Posterior vena cava (tissue), 2 donors: ENCODE measurements at regions of chr7 and their contacts with region 1.

Region 1: DNA sequence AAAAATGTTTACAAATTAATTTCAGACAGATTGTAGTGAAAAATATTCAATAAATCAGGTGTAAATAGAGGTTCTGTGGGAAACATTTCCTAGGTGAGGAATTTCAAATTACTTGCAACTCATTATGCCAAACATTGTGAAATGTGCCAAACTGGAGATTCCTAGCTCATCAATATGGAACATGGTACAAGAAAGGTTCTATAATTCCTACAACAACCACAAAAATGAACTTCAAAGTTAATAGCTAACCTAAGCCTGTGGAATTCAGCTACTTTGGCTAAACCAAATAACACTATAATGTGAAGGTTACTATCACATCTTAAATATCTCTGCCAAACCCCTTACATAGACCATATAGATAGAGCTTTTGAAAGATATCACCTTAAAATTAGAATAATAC is 223.3 kb upstream of the HGF start:
- DNase-seq: no peak

Region 2: GRCh38 chr7:81231301-81231838 is 761.8 kb before region 1 on chr7:
- intact Hi-C with region 1: no loop called
- DNase-seq: no peak

Region 3: GRCh38 chr7:82032901-82033300 is 39.7 kb after region 1 on chr7:
- intact Hi-C with region 1: loop called in 1 of 2 experiments (anchors 2 kb)
- DNase-seq: no peak